ENCODE measurements at regions of chr13 and their contacts with region 1.

Region 1: GRCh38 chr13:23579072-23579895 is 9.1 kb downstream of the TNFRSF19 start:
- DNase-seq: peak; percentile 83 to 89 (median 87)
- H3K4me3 ChIP-seq: peak overlapping the region; percentile 23 to 69
- H3K4me3 Mint-ChIP-seq: peak overlapping the region; percentile 75 to 85 (median 82)
- H3K27ac ChIP-seq: peak overlapping the region; percentile 48
- H3K27ac Mint-ChIP-seq: peak overlapping the region in 5 of 7 donors; percentile 55 to 87 (median 81)
- H3K4me1 ChIP-seq: peaks cover 17% of the 10 kb centered on the region
- H3K4me1 Mint-ChIP-seq: peaks cover 12 to 20% (median 16%) of the 10 kb centered on the region in 4 donors
- H3K27me3 ChIP-seq: peaks cover 13% of the 10 kb centered on the region
- H3K27me3 Mint-ChIP-seq: peaks cover 31% of the 10 kb centered on the region in 2 donors

Region 2: GRCh38 chr13:23466144-23467002 is 112.9 kb before region 1 on chr13:
- CTCF ChIA-PET with region 1: interaction called, 6 read pairs
- POLR2A ChIA-PET with region 1: no interaction called
- intact Hi-C with region 1: loop called (anchors 5 kb)
- DNase-seq: peak; percentile 43 to 65 (median 63)
- H3K4me3 ChIP-seq: peak overlapping the region in 1 of 2 donors; percentile 44
- H3K4me3 Mint-ChIP-seq: peak overlapping the region; percentile 76 to 89 (median 83)
- H3K27ac ChIP-seq: no peak overlapping the region
- H3K27ac Mint-ChIP-seq: peak overlapping the region in 3 of 7 donors; percentile 11 to 69 (median 63)
- H3K4me1 ChIP-seq: peaks cover 4% of the 10 kb centered on the region
- H3K4me1 Mint-ChIP-seq: peaks cover 0 to 8% (median 2%) of the 10 kb centered on the region in 4 donors
- H3K27me3 ChIP-seq: no peaks in the 10 kb centered on the region
- H3K27me3 Mint-ChIP-seq: peaks cover 7% of the 10 kb centered on the region in 2 donors

Region 3: DNA sequence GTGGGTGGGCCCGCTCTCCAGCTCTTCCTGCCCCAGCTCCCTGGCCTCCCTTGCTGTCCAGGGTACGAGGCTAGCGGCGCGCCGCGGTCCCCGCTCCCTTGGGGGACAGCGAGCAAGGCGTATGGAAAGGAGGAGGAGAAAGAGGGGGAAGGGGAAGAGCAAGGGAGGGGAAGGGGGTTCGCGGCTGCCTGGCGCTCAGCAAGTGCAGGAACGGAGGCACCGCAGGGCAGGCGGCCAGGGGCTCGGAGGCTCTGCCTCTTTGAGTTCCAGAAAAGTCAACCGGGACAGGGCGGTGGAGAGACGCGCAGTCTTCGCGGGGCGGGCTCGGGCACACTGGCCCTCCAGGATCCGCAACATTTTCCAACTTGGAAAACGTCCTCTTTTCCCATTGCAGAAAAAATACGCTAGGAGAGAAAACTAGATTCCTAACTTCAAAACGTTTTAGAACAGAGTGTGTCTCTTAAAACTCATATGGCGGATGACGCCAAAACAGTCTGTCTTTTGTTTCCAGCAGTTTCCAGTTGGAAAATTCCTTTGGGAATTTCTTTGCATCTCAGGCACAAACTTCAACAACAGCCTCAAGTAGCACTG is 32.2 kb before region 1 on chr13:
- CTCF ChIA-PET with region 1: no interaction called
- POLR2A ChIA-PET with region 1: no interaction called
- intact Hi-C with region 1: no loop called
- DNase-seq: no peak
- H3K4me3 ChIP-seq: no peak overlapping the region
- H3K4me3 Mint-ChIP-seq: no peak overlapping the region
- H3K27ac ChIP-seq: no peak overlapping the region
- H3K27ac Mint-ChIP-seq: no peak overlapping the region
- H3K4me1 ChIP-seq: no peaks in the 10 kb centered on the region
- H3K4me1 Mint-ChIP-seq: peaks cover 0 to 5% (median 0%) of the 10 kb centered on the region in 4 donors
- H3K27me3 ChIP-seq: no peaks in the 10 kb centered on the region
- H3K27me3 Mint-ChIP-seq: peaks cover 23 to 29% of the 10 kb centered on the region in 2 donors

Region 4: DNA sequence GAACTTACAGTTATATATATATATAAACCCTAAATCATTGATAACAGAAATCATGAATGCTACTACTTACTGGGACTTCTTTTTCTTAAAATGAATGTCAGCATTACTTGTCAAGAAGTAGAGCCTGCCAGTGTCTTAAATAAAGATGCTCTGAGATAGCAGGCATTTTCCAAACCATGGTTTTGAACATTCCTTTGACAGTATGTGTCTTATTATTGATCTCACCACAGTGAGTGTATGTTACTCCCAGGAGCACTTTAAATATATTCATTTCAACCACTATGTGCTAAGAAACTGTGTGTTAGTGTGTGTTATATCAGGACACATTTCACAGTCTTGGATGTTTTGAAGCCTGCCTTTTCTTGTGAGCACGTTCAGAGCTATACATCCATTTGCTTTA is 19.1 kb after region 1 on chr13:
- CTCF ChIA-PET with region 1: no interaction called
- POLR2A ChIA-PET with region 1: no interaction called
- intact Hi-C with region 1: no loop called
- DNase-seq: no peak
- H3K4me3 ChIP-seq: no peak overlapping the region
- H3K4me3 Mint-ChIP-seq: no peak overlapping the region
- H3K27ac ChIP-seq: no peak overlapping the region
- H3K27ac Mint-ChIP-seq: no peak overlapping the region
- H3K4me1 ChIP-seq: no peaks in the 10 kb centered on the region
- H3K4me1 Mint-ChIP-seq: no peaks in the 10 kb centered on the region
- H3K27me3 ChIP-seq: no peaks in the 10 kb centered on the region
- H3K27me3 Mint-ChIP-seq: peaks cover 18 to 27% of the 10 kb centered on the region in 2 donors

Region 5: DNA sequence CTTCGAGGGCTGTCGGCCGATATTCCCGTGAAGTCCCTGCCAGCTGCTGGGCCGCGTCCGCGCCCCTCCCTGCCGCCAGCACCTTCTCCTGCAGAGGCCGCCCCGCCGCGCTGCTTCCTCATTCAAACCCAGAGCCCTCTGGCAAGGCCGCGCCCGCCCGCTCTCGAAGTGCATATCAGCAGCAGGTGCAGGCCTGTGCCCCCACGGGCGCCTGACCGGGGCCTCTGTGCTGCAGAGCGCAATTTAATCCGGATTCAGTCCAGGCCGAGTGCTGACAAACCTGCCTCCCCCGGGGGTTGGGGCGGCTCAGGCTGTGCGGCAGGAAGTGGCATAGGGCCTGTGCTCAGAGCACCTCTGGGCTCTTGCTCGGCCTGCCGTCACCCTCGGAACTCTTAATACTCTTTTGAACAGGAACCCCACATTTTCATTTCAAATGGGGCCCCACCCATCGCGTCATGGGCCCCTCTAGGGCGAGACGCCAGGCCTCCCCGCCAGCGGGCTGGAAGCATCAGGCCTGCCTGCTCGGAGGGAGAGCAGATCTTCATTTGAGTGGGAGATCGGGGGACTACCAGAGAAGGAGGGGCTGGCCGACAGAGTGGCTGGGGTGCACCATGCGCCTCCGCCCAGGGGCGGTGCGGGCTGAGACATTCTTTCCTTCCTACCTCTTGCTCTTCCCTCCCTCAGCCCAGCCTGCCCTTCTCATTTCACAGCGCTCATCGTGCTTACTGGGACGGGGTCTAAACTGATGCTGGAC is 116.6 kb after region 1 on chr13:
- CTCF ChIA-PET with region 1: no interaction called
- POLR2A ChIA-PET with region 1: interaction called, 3 read pairs
- intact Hi-C with region 1: loop called (anchors 5 kb)
- DNase-seq: peak; percentile 55 to 70 (median 63)
- H3K4me3 ChIP-seq: peak overlapping the region in 1 of 2 donors; percentile 1
- H3K4me3 Mint-ChIP-seq: peak overlapping the region; percentile 73 to 89 (median 84)
- H3K27ac ChIP-seq: peak overlapping the region; percentile 42
- H3K27ac Mint-ChIP-seq: peak overlapping the region; percentile 88 to 97 (median 96)
- H3K4me1 ChIP-seq: peaks cover 10% of the 10 kb centered on the region
- H3K4me1 Mint-ChIP-seq: peaks cover 8 to 26% (median 13%) of the 10 kb centered on the region in 4 donors
- H3K27me3 ChIP-seq: peaks cover 3% of the 10 kb centered on the region
- H3K27me3 Mint-ChIP-seq: peaks cover 0 to 1% of the 10 kb centered on the region in 2 donors

Region 6: GRCh38 chr13:23752111-23753001 is 173.1 kb after region 1 on chr13:
- CTCF ChIA-PET with region 1: interaction called, 3 read pairs
- POLR2A ChIA-PET with region 1: no interaction called
- intact Hi-C with region 1: loop called (anchors 10 kb)
- DNase-seq: no peak
- H3K4me3 ChIP-seq: no peak overlapping the region
- H3K4me3 Mint-ChIP-seq: no peak overlapping the region
- H3K27ac ChIP-seq: no peak overlapping the region
- H3K27ac Mint-ChIP-seq: peak overlapping the region in 4 of 7 donors; percentile 22 to 72 (median 42)
- H3K4me1 ChIP-seq: peaks cover 30% of the 10 kb centered on the region
- H3K4me1 Mint-ChIP-seq: peaks cover 16 to 42% (median 23%) of the 10 kb centered on the region in 4 donors
- H3K27me3 ChIP-seq: no peaks in the 10 kb centered on the region
- H3K27me3 Mint-ChIP-seq: no peaks in the 10 kb centered on the region

Region 7: DNA sequence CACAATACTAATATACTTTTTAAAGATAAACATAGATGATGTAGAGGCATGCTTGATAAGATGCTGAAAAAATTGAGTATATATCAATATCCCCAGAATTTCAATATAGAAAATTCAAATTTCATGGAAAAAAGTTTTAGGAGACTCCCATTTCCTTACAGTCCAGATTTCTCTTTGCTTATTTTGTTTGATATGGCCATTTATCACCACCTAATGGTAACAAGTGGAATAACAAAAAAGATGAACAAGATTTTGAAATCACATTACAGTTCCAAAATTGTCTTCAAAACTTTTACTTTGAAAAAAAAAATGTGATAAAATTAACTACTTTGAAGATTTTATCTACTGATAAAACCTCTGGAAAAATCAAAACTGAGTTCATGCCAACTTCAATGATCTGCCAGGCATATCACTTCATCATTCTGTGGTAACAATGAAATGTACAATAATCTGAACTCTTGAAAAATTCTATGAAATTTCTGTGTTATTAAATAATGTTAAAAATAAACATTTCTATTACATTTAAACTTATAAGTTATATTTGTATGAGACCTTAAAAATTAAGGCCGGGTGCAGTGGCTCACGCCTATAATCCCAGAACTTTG is 292.4 kb after region 1 on chr13:
- CTCF ChIA-PET with region 1: interaction called, 5 read pairs
- POLR2A ChIA-PET with region 1: no interaction called
- intact Hi-C with region 1: loop called (anchors 1 kb)
- DNase-seq: peak in 4 of 5 donors; percentile 11 to 28 (median 20)
- H3K4me3 ChIP-seq: no peak overlapping the region
- H3K4me3 Mint-ChIP-seq: no peak overlapping the region
- H3K27ac ChIP-seq: no peak overlapping the region
- H3K27ac Mint-ChIP-seq: no peak overlapping the region
- H3K4me1 ChIP-seq: no peaks in the 10 kb centered on the region
- H3K4me1 Mint-ChIP-seq: no peaks in the 10 kb centered on the region
- H3K27me3 ChIP-seq: no peaks in the 10 kb centered on the region
- H3K27me3 Mint-ChIP-seq: no peaks in the 10 kb centered on the region

Region 8: DNA sequence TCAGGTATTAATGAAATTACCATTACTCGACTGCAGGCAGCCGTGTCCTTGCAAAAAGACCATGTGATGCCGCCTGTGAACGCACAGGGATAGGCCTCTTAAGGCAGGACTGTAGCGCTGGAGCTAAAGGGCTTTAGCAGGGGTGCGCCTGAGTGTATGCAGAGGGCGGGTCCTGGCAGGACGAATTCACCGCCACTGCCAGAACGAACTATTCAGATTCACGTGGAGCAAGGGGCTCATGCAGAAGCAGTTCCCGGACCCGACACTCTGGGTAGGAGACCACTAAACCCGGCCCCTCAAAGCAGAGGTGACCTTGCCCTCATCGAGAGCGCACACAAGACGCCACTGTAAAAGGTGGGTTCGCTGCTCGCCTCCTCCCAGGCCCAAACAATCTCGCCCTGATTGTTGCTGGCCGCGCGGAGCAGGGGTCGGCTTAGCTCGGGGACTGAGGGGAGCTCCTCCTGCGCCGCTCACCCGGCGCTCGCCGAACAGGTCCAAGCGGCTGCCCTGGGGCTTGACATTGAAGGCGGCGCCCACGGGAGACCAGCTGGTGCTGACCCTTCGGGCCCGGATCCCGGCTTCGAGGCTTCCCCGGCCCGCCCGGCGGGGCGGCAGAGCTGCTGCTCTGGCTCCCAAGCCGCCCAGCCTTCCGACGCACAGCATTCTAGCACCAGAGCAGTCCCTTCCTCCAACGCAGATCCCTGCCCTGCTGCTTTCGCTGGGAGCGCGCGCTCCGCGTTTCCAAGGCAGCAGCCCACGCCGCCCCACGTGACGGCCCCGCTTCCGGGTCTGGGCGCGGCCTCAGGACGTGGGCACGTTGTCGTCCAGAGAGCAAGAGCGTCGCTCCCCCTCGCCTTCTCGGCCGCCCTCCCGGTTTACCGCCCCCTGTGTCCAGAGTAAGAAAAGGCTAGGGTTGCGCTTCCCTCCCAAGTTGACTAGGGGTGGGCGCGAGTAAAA is 309.7 kb after region 1 on chr13 and contains the start of gene MIPEP:
- CTCF ChIA-PET with region 1: no interaction called
- POLR2A ChIA-PET with region 1: interaction called, 3 read pairs
- intact Hi-C with region 1: loop called (anchors 2 kb)
- DNase-seq: peak; percentile 82 to 87 (median 84)
- H3K4me3 ChIP-seq: peak within 1 kb of the TSS; percentile 43 to 88
- H3K4me3 Mint-ChIP-seq: peak within 1 kb of the TSS; percentile 89 to 95 (median 93)
- H3K27ac ChIP-seq: peak within 1 kb of the TSS; percentile 64
- H3K27ac Mint-ChIP-seq: peak within 1 kb of the TSS; percentile 75 to 92 (median 89)
- H3K4me1 ChIP-seq: peaks cover 16% of the 10 kb centered on the region
- H3K4me1 Mint-ChIP-seq: peaks cover 12 to 26% (median 19%) of the 10 kb centered on the region in 4 donors
- H3K27me3 ChIP-seq: no peaks in the 10 kb centered on the region
- H3K27me3 Mint-ChIP-seq: no peaks in the 10 kb centered on the region
- total RNA-seq, gene MIPEP: 8.8 to 9.1 TPM

Region 9: DNA sequence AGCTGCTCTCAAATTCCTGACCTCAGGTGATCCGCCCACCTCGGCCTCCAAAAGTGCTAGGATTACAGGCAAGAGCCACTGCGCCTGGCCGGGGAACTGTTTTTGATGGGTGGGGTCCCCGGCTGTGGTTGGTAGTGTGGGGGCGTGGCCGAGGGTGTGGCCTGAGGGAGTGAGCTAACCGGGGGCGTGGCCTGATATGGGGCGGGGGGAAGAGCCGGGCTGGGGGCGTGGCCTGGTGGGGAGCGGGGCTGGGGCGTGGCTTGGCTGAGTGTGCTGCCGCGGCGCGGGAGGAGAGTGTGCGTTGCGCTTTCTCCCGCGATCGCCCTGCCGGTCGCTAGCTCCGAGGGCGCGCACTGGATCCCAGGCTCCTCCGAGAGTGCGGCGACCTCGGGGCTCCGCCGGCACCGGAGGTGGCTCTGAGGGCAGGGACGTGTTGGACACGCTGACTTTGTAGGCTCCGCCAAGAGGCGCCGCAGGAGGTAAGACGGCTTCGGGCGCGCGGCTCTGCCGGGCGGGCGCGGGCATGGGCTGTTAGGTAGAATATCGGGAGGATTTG is 581.2 kb after region 1 on chr13 and contains the start of gene SPATA13:
- CTCF ChIA-PET with region 1: no interaction called
- POLR2A ChIA-PET with region 1: no interaction called
- intact Hi-C with region 1: loop called (anchors 2 kb)
- DNase-seq: peak; percentile 88 to 90 (median 88)
- H3K4me3 ChIP-seq: peak within 1 kb of the TSS; percentile 69
- H3K4me3 Mint-ChIP-seq: peak within 1 kb of the TSS; percentile 78 to 90 (median 86)
- H3K27ac ChIP-seq: peak within 1 kb of the TSS; percentile 19
- H3K27ac Mint-ChIP-seq: peak within 1 kb of the TSS in 5 of 7 donors; percentile 32 to 83 (median 72)
- H3K4me1 ChIP-seq: peaks cover 19% of the 10 kb centered on the region
- H3K4me1 Mint-ChIP-seq: peaks cover 9 to 16% (median 12%) of the 10 kb centered on the region in 4 donors
- H3K27me3 ChIP-seq: no peaks in the 10 kb centered on the region
- H3K27me3 Mint-ChIP-seq: peaks cover 0 to 2% of the 10 kb centered on the region in 2 donors
- total RNA-seq, gene SPATA13: 107 to 110 TPM

Region 10: DNA sequence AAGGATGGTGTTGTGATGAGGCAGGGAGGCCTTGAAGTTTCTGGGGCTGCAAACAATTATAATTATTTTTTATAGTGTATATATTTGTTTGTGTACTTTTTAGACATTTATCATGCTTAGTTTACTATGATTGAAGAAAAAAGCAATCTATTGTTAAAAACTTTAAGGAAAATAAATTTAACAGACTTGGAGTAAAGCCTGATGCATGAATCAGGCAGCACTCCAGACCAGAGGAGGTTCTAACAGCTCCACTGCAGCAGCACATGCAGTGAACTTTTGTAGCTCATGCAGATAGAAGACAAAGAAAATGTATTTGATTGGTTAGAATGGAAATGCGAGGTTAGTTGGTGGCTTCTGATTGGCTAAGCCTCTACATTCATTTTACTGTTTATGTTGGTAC is 1479.9 kb after region 1 on chr13:
- CTCF ChIA-PET with region 1: no interaction called
- POLR2A ChIA-PET with region 1: no interaction called
- intact Hi-C with region 1: no loop called
- DNase-seq: no peak
- H3K4me3 ChIP-seq: no peak overlapping the region
- H3K4me3 Mint-ChIP-seq: no peak overlapping the region
- H3K27ac ChIP-seq: no peak overlapping the region
- H3K27ac Mint-ChIP-seq: no peak overlapping the region
- H3K4me1 ChIP-seq: no peaks in the 10 kb centered on the region
- H3K4me1 Mint-ChIP-seq: no peaks in the 10 kb centered on the region
- H3K27me3 ChIP-seq: no peaks in the 10 kb centered on the region
- H3K27me3 Mint-ChIP-seq: peaks cover 6 to 12% of the 10 kb centered on the region in 2 donors